Endothelial cell of umbilical vein (primary cell): ENCODE measurements at regions of chr6 and their contacts with region 1.

Region 1: DNA sequence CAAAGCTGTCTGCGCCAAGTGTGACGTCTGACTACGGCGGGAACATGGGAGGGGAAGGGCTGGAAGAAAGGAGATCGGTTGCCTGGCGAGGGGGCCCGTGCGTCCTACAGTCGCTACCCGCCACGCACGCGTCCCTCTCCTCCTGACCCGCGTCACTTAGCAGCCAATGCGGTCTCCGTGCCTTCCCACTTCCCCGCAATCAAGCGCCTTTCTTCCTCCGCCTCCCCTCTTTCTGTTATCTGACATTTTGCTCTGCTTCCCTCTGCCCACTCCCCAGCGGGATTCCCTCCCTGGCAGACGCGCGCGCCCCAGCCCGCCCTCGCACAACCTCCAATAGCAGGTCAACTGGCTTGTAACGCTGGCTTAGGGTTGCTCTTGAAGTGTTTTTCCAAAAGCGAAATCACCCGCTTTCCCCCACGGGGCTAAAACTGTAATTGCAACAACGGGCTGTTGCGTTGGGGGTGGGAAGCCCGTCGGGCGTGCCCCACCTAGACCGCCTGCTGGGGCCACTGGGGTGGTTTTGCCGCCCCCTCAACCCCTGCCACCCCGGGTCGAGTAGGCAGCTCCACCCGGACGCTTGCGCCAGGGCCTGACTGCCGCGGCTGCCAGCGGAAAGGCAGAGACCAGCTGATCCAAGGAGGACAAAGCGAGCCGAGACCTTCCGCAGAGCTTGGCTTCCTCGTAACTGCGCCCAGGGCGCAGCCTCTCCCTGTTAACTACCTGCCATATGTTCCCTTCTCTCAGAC is 6.2 kb upstream of the SOX4 start:
- DNase-seq: peak; percentile 78
- H3K4me3 ChIP-seq: peak overlapping the region; percentile 33 to 65 (median 46)
- H3K27ac ChIP-seq: peak overlapping the region; percentile 71
- H3K4me1 ChIP-seq: peaks cover 17% of the 10 kb centered on the region
- H3K27me3 ChIP-seq: no peaks in the 10 kb centered on the region
- CTCF ChIP-seq: peak in 1 of 2 donors; percentile 50
- POLR2A ChIP-seq: no peak

Region 2: DNA sequence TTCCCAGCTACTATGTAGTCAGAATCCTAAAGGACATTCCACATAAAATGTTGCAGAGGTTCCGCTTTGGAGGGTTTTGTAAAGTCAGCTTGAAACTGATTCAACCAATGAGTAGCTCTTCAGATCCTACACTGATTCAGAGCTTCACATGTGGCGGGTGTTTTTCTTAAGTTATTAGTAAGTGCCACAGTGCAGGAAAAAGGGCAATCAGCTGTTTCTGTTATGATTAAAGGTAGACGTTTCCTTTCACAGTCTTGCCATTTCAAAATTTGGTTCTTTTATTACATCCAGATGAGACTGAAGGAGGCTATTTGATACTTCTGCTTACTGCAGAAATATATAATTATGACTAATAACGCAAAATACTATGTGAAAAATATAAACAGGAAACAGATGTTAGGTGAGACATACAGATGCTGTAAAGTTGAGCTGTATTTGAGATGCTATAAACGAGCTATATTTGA is 609.2 kb before region 1 on chr6:
- CTCF ChIA-PET with region 1: interaction called, 3 read pairs
- POLR2A ChIA-PET with region 1: no interaction called
- dilution Hi-C with region 1: no loop called
- intact Hi-C with region 1: loop called (anchors 1 kb)
- DNase-seq: peak; percentile 93
- H3K4me3 ChIP-seq: no peak overlapping the region
- H3K27ac ChIP-seq: peak overlapping the region; percentile 40
- H3K4me1 ChIP-seq: peaks cover 18% of the 10 kb centered on the region
- H3K27me3 ChIP-seq: no peaks in the 10 kb centered on the region
- CTCF ChIP-seq: no peak
- POLR2A ChIP-seq: no peak

Region 3: DNA sequence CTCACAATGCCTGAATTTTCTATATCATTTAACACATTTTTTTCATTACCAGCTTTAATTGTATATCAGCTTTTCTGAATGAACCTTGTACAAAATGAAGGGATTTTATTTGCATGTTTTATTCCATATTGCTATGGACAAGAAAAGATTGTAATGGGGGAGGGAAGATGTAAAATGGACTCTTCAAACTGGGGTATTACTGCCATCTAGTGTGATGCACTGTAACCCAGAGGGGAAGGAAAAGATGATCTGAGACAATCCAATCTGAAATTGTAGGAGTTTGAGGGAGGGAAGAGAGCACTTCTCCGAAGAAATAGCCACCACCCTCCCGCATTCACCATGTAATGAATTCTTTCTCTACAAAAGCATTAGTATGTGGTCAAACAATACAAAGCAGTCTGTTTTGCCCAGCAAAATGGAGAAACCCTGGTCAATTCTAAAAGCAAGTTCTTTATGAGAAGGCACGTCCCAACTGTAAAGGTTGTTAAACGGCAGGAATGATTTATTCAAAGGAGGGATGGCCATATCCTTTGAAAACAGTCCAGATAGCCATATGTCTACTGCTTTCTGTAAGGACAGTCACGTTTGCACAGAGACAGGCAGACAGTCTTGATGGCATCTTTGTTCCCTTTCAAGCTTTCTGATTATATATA is 1859.2 kb after region 1 on chr6:
- CTCF ChIA-PET with region 1: interaction called, 4 read pairs
- POLR2A ChIA-PET with region 1: no interaction called
- dilution Hi-C with region 1: no loop called
- intact Hi-C with region 1: loop called (anchors 1 kb)
- DNase-seq: peak; percentile 69
- H3K4me3 ChIP-seq: no peak overlapping the region
- H3K27ac ChIP-seq: no peak overlapping the region
- H3K4me1 ChIP-seq: no peaks in the 10 kb centered on the region
- H3K27me3 ChIP-seq: no peaks in the 10 kb centered on the region
- CTCF ChIP-seq: peak; percentile 34 to 48
- POLR2A ChIP-seq: no peak